Esophagus muscularis mucosa (tissue), 4 donors: ENCODE measurements at regions of chr11 and their contacts with region 1.

Region 1: GRCh38 chr11:2532704-2533586 is 88.1 kb downstream of the KCNQ1 start:
- DNase-seq: peak; percentile 97
- H3K4me3 ChIP-seq: peak overlapping the region; percentile 26 to 44 (median 34)
- H3K27ac ChIP-seq: peak overlapping the region in 1 of 4 donors; percentile 33
- H3K4me1 ChIP-seq: peaks cover 12 to 31% (median 18%) of the 10 kb centered on the region in 4 donors
- H3K27me3 ChIP-seq: peaks cover 0 to 9% (median 0%) of the 10 kb centered on the region in 4 donors
- CTCF ChIP-seq: peak in 2 of 3 experiments; percentile 99
- EP300 ChIP-seq: no peak
- POLR2A ChIP-seq: no peak

Region 2: DNA sequence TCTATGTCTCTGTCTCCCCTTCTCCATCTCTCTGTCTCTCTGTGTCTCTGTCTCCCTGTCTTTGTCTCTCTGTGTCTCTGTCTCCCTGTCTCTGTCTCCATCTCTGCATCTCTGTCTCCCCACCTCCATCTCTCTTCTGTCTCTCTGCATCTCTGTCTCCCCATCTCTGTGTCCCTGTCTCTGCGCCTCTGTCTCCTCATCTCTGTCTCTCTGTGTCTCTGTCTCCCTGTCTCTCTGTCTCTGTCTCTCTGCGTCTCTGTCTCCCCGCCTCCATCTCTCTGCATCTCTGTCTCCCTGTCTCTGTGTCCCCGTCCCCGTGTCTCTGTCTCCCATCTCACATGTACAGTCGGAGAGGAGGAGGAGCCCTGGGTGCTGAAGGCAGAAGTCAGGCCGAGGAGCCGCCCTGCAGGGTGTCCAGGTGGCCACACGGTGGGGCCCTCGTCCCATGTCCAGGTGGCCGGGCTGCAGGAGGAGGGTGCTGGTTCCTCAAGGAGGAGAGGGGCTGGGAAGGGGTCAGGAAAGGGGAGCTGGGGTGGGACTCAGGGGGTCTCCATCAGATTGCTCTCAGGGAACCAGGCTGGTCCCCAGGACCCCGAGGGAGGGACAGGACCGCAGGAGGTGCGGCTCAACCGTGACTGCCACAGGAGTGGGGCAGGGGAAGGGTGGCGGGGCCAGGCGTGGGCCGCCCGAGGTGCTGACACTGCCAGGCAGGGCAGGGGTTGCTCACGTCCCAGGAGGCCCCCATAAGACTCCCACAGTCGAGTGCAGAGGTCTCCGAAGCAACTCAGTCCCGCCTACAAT is 335.8 kb before region 1 on chr11:
- intact Hi-C with region 1: loop called (anchors 10 kb)
- DNase-seq: peak; percentile 94
- H3K4me3 ChIP-seq: no peak overlapping the region
- H3K27ac ChIP-seq: no peak overlapping the region
- H3K4me1 ChIP-seq: peaks cover 0 to 4% (median 0%) of the 10 kb centered on the region in 4 donors
- H3K27me3 ChIP-seq: peaks cover 0 to 28% (median 0%) of the 10 kb centered on the region in 4 donors
- CTCF ChIP-seq: peak; percentile 76 to 92 (median 88)
- EP300 ChIP-seq: no peak
- POLR2A ChIP-seq: no peak

Region 3: DNA sequence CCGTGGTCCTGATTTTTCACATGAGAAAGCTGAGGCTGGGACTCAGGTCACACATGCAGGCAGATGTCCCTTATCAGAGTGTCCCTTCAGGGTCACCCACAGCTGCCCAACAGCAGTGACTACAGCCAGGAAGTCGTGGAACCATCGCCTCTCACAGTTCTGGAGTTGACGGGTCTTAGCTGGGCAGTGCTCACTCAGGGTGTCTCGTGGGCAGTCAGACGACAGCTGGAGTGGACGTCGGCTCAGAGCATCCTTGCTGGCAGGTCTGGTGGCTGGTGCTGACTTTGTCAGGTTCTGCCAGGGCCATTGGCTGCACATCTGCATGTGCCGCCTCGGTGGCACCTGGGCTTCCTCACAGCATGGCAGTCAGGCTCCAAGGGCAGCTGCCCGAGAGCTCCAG is 325.7 kb before region 1 on chr11:
- intact Hi-C with region 1: no loop called
- DNase-seq: no peak
- H3K4me3 ChIP-seq: no peak overlapping the region
- H3K27ac ChIP-seq: no peak overlapping the region
- H3K4me1 ChIP-seq: no peaks in the 10 kb centered on the region
- H3K27me3 ChIP-seq: peaks cover 0 to 53% (median 0%) of the 10 kb centered on the region in 4 donors
- CTCF ChIP-seq: no peak
- EP300 ChIP-seq: no peak
- POLR2A ChIP-seq: no peak

Region 4: GRCh38 chr11:2305140-2305840 is 227.7 kb before region 1 on chr11:
- intact Hi-C with region 1: loop called (anchors 10 kb)
- DNase-seq: no peak
- H3K4me3 ChIP-seq: peak overlapping the region in 3 of 4 donors; percentile 5 to 28 (median 22)
- H3K27ac ChIP-seq: peak overlapping the region; percentile 79 to 89 (median 88)
- H3K4me1 ChIP-seq: peaks cover 50 to 59% (median 54%) of the 10 kb centered on the region in 4 donors
- H3K27me3 ChIP-seq: no peaks in the 10 kb centered on the region
- CTCF ChIP-seq: peak; percentile 94 to 96 (median 94)
- EP300 ChIP-seq: no peak
- POLR2A ChIP-seq: no peak

Region 5: DNA sequence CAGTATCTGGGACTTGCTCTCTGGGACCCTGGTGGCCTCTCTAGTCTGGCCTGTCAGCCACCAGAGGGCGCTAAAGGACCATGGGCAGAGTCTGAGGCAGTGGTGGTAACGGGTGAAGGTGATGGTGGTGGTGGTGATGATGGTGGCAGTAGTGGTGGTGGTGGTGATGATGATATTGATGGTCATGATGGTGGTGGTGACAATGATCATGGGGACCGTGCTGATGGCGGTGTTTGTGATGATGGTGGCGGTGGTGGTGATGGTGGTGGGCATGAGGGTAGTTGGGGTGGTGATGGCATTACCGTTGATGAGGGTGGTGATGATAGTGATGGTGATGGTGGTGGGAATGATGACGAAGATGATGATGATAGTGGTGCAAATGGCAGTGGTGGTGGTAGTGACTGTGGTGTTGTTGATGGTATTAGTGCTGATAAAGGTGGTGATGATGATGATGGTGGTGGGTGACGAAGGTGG is 104.6 kb before region 1 on chr11:
- intact Hi-C with region 1: loop called (anchors 2 kb)
- DNase-seq: no peak
- H3K4me3 ChIP-seq: no peak overlapping the region
- H3K27ac ChIP-seq: no peak overlapping the region
- H3K4me1 ChIP-seq: no peaks in the 10 kb centered on the region
- H3K27me3 ChIP-seq: peaks cover 0 to 35% (median 0%) of the 10 kb centered on the region in 4 donors
- CTCF ChIP-seq: peak; percentile 56 to 69 (median 66)
- EP300 ChIP-seq: no peak
- POLR2A ChIP-seq: no peak

Region 6: GRCh38 chr11:2484576-2485125 is 48.3 kb before region 1 on chr11:
- intact Hi-C with region 1: no loop called
- DNase-seq: peak; percentile 75
- H3K4me3 ChIP-seq: no peak overlapping the region
- H3K27ac ChIP-seq: no peak overlapping the region
- H3K4me1 ChIP-seq: peaks cover 0 to 3% (median 0%) of the 10 kb centered on the region in 4 donors
- H3K27me3 ChIP-seq: peaks cover 0 to 40% (median 0%) of the 10 kb centered on the region in 4 donors
- CTCF ChIP-seq: no peak
- EP300 ChIP-seq: no peak
- POLR2A ChIP-seq: no peak

Region 7: GRCh38 chr11:2699531-2700414 is 166.8 kb after region 1 on chr11 and contains the start of gene KCNQ1OT1:
- intact Hi-C with region 1: loop called (anchors 5 kb)
- DNase-seq: peak; percentile 96
- H3K4me3 ChIP-seq: peak within 1 kb of the TSS; percentile 59 to 85 (median 78)
- H3K27ac ChIP-seq: peak within 1 kb of the TSS; percentile 92 to 98 (median 94)
- H3K4me1 ChIP-seq: peaks cover 3 to 38% (median 36%) of the 10 kb centered on the region in 4 donors
- H3K27me3 ChIP-seq: no peaks in the 10 kb centered on the region
- CTCF ChIP-seq: no peak
- EP300 ChIP-seq: no peak
- POLR2A ChIP-seq: peak; percentile 73
- total RNA-seq, gene KCNQ1OT1: 0.66 to 2.5 (median 1.3) TPM

Region 8: DNA sequence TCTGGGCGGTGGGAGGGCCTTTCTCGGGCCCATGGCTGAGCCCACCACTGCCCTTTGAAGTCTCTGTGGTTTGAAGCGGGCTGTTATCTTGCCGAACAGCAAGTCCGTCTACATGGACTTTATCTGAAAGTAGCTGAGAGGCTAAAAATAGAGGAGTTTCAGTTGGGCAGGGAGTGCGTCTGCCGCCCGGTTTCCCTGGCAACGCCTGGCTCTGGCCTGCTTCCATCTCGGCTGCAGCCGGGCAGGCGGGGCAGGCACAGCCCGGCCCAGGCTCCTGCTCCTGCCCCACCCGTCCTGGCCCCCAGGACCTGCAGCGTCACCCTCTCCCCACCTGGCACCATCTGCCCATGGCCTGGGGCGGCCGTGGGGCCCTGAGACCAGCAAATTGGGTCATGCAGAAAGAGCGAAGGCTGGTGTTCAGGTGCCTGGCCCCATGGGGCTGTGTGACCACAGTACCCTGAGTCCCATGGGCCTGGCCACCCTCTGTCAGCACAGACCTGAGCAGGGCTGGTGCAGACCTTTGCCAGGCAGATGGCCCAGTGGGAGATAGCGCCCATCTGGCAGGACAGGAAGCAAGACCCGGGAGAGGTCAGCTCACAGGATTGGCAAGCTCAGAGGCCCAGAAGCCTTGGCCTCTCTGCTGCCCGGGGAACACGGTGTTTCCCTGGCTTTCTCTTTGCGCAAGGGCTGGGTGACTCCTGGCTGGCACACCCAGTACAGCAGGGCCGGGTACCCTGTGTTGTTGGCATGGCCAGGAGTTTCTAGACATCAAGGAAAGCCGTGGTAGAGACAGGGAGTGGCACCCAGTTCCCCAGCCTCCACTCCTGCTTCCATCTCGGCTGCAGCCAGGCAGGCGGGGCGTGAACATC is 245.9 kb after region 1 on chr11:
- intact Hi-C with region 1: loop called (anchors 10 kb)
- DNase-seq: peak; percentile 92
- H3K4me3 ChIP-seq: peak overlapping the region; percentile 20 to 47 (median 36)
- H3K27ac ChIP-seq: peak overlapping the region; percentile 84 to 91 (median 86)
- H3K4me1 ChIP-seq: peaks cover 41 to 52% (median 45%) of the 10 kb centered on the region in 4 donors
- H3K27me3 ChIP-seq: no peaks in the 10 kb centered on the region
- CTCF ChIP-seq: peak; percentile 40 to 72 (median 51)
- EP300 ChIP-seq: peak; percentile 87
- POLR2A ChIP-seq: no peak

Region 9: GRCh38 chr11:2885676-2886081 is 352.7 kb after region 1 on chr11 and contains the start of gene CDKN1C:
- intact Hi-C with region 1: loop called (anchors 1 kb)
- DNase-seq: peak; percentile 98
- H3K4me3 ChIP-seq: peak within 1 kb of the TSS; percentile 93 to 97 (median 95)
- H3K27ac ChIP-seq: peak within 1 kb of the TSS; percentile 91 to 96 (median 94)
- H3K4me1 ChIP-seq: peaks cover 34 to 76% (median 58%) of the 10 kb centered on the region in 4 donors
- H3K27me3 ChIP-seq: no peaks in the 10 kb centered on the region
- CTCF ChIP-seq: no peak
- EP300 ChIP-seq: no peak
- POLR2A ChIP-seq: peak; percentile 80
- total RNA-seq, gene CDKN1C: 153 to 349 (median 186) TPM